Panc1 (cell line): ENCODE measurements at regions of chr1 and their contacts with region 1.

Region 1: DNA sequence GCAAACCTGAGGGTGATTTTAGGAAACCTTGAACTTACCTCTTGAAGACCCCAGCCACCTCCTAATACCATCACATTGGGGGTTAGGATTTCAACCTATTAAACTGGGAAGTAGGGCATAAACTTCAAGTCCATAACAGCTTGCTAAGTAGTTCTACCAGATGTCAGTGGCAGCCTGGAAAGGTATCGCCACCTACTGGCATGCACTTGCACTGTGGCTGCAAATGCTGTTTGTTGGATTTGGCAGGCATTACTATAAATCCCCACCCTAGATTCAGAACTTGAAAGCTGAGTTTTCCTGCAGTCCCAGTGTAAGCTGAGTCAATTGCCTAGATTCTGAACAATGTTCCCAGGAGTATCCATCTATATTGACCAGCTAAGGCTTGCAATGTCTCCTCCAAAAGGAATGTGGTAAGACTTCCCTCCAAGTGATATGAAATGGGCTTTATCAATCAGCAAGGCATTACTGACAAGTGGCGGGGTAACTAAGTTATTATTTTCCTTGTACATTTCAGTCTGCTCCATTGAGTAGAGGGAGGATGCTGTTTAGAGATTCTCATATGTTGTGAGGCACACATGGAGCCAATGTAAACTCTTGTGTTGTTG is 474.5 kb downstream of the PTPRC start:
- DNase-seq: peak; percentile 35
- ATAC-seq: peak; percentile 42; the same call in 1 of the 2 replicates
- H3K4me3 ChIP-seq: no peak overlapping the region
- H3K27ac ChIP-seq: no peak overlapping the region
- H3K4me1 ChIP-seq: no peaks in the 10 kb centered on the region
- H3K27me3 ChIP-seq: no peaks in the 10 kb centered on the region
- CTCF ChIP-seq: peak; percentile 86

Region 2: GRCh38 chr1:198771563-198772153 is 341.7 kb before region 1 on chr1:
- CTCF ChIA-PET with region 1: no interaction called
- POLR2A ChIA-PET with region 1: no interaction called
- in situ Hi-C with region 1: no loop called
- intact Hi-C with region 1: loop called (anchors 5 kb)
- DNase-seq: no peak
- ATAC-seq: no peak
- H3K4me3 ChIP-seq: no peak overlapping the region
- H3K27ac ChIP-seq: no peak overlapping the region
- H3K4me1 ChIP-seq: no peaks in the 10 kb centered on the region
- H3K27me3 ChIP-seq: no peaks in the 10 kb centered on the region
- CTCF ChIP-seq: peak; percentile 60; the same call in 1 of the 2 replicates

Region 3: DNA sequence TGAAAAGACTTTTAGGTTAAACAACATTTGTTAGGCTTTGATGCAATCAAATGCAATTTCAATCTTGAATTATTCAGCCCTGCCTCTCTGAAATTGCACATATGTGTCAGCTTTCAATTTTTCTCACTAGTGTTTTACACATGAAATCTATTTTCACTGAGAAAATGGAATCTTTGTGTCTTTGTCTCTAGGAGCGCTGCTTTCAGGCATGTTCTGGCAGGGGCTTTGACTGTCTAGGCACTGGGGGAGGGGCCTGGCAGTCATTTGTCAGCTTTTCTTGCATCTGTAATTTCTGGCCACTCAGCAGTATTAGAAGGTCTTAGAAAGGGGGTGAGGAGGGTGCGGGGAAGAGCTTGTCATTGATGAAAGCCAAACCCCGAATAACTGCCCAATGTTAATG is 210.2 kb before region 1 on chr1:
- CTCF ChIA-PET with region 1: no interaction called
- POLR2A ChIA-PET with region 1: no interaction called
- in situ Hi-C with region 1: no loop called
- intact Hi-C with region 1: no loop called
- DNase-seq: no peak
- ATAC-seq: no peak
- H3K4me3 ChIP-seq: no peak overlapping the region
- H3K27ac ChIP-seq: peak overlapping the region; percentile 70
- H3K4me1 ChIP-seq: peaks cover 45% of the 10 kb centered on the region
- H3K27me3 ChIP-seq: no peaks in the 10 kb centered on the region
- CTCF ChIP-seq: no peak

Region 4: GRCh38 chr1:198937231-198938031 is 175.9 kb before region 1 on chr1:
- CTCF ChIA-PET with region 1: interaction called, 3 read pairs
- POLR2A ChIA-PET with region 1: no interaction called
- in situ Hi-C with region 1: no loop called
- intact Hi-C with region 1: loop called (anchors 10 kb)
- DNase-seq: peak; percentile 84
- ATAC-seq: peak; percentile 85
- H3K4me3 ChIP-seq: peak overlapping the region; percentile 70 to 88
- H3K27ac ChIP-seq: peak overlapping the region; percentile 99
- H3K4me1 ChIP-seq: peaks cover 13% of the 10 kb centered on the region
- H3K27me3 ChIP-seq: no peaks in the 10 kb centered on the region
- CTCF ChIP-seq: no peak

Region 5: GRCh38 chr1:199002661-199003060 is 110.7 kb before region 1 on chr1:
- CTCF ChIA-PET with region 1: no interaction called
- POLR2A ChIA-PET with region 1: interaction called, 15 read pairs
- in situ Hi-C with region 1: no loop called
- intact Hi-C with region 1: no loop called
- DNase-seq: no peak
- ATAC-seq: no peak
- H3K4me3 ChIP-seq: no peak overlapping the region
- H3K27ac ChIP-seq: no peak overlapping the region
- H3K4me1 ChIP-seq: no peaks in the 10 kb centered on the region
- H3K27me3 ChIP-seq: no peaks in the 10 kb centered on the region
- CTCF ChIP-seq: no peak